ENCODE measurements at regions of chr4 and their contacts with region 1.

Region 1: DNA sequence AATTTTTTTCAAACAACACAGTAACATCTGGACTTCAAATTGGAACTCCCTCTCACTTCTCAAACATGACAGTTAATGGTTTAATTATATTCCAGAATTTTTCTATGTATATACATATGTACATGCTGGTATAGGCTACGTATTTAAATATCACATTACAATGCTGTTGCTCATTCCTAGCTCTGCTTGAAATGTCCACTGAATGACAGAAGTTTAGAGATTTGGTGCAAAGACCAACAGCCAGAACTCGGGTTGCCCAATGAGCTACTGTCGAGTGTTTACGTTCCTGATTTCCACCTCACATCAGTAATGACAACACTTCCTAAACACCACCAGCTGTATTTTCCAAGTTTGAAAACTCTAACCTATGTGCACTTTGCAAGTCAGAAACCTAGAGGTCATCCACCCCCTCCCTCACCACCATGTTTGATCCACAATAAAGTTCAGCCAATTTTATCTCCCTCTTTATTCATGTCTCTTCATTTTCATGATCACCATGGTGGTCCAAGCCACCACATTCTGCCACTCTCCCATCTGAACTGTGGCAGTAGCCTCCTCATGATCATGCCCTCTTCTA is 49.3 kb upstream of the RPL34 start:
- DNase-seq: no peak
- H3K4me3 ChIP-seq: no peak overlapping the region
- H3K27ac ChIP-seq: no peak overlapping the region
- H3K4me1 ChIP-seq: peaks cover 0 to 4% (median 0%) of the 10 kb centered on the region in 4 experiments; a peak in 1 of 7 replicates
- H3K27me3 ChIP-seq: peaks cover 0 to 1% (median 0%) of the 10 kb centered on the region in 4 experiments; a peak in 1 of 7 replicates
- CTCF ChIP-seq: no peak
- EP300 ChIP-seq: no peak
- POLR2A ChIP-seq: no peak
- RAD21 ChIP-seq: no peak

Region 2: DNA sequence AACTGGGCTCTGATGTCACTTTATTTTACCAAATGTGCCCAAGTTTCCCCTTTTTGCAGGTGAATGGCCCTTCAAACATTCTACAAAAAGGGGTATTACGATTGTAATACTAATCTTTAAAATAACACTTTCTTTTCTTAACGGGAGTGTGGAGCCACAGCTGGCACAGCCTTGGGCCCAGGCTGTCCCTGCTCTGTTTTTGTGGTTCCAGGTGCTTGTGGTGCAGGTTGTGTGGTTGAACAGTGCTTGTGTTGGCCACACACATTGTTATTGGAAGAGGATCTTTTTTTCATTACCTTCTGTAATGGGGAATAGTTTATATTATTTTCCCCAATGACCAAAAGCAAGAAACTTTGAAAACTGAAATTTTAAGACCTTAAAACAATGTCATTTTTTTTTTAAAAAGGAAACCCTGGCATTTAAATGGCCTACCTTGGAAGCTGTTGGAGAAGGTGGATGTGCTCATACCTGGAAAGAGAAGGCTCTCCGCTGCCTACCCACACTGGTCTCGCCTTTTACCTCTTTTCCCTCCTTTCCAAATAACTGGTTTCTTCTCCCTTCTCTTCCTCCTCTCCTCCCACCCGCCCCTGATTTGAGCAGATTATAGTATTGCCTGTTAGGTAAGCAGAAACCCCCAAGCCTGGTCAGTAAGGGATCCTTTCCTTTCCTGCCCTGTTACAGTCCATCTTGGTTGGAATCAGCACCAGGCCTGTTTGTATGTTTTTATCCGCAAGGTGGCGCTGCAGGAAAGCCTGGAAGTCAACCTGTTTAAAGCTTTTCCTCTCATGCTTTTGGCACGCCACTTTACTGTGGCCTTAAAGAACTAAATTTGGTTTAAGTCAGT is 552.8 kb before region 1 on chr4:
- CTCF ChIA-PET with region 1: interaction called, 31 read pairs
- POLR2A ChIA-PET with region 1: no interaction called
- DNase-seq: peak; percentile 19 to 91
- H3K4me3 ChIP-seq: no peak overlapping the region
- H3K27ac ChIP-seq: no peak overlapping the region
- H3K4me1 ChIP-seq: no peaks in the 10 kb centered on the region
- H3K27me3 ChIP-seq: no peaks in the 10 kb centered on the region
- CTCF ChIP-seq: peak; percentile 57 to 87 (median 75)
- EP300 ChIP-seq: no peak
- POLR2A ChIP-seq: no peak
- RAD21 ChIP-seq: peak; percentile 84 to 87

Region 3: GRCh38 chr4:108036213-108036612 is 534.9 kb before region 1 on chr4:
- CTCF ChIA-PET with region 1: interaction called, 10 read pairs
- POLR2A ChIA-PET with region 1: no interaction called
- DNase-seq: no peak
- H3K4me3 ChIP-seq: no peak overlapping the region
- H3K27ac ChIP-seq: no peak overlapping the region
- H3K4me1 ChIP-seq: no peaks in the 10 kb centered on the region
- H3K27me3 ChIP-seq: no peaks in the 10 kb centered on the region
- CTCF ChIP-seq: no peak
- EP300 ChIP-seq: no peak
- POLR2A ChIP-seq: no peak
- RAD21 ChIP-seq: no peak

Region 4: GRCh38 chr4:108160741-108161352 is 410.2 kb before region 1 on chr4:
- CTCF ChIA-PET with region 1: interaction called, 10 read pairs
- POLR2A ChIA-PET with region 1: no interaction called
- DNase-seq: no peak
- H3K4me3 ChIP-seq: peak overlapping the region in 1 of 4 experiments; percentile 31; a peak in 2 of 8 replicates
- H3K27ac ChIP-seq: no peak overlapping the region
- H3K4me1 ChIP-seq: peaks cover 3 to 12% (median 7%) of the 10 kb centered on the region in 4 experiments; a peak in 5 of 7 replicates
- H3K27me3 ChIP-seq: peaks cover 13 to 35% (median 23%) of the 10 kb centered on the region in 4 experiments
- CTCF ChIP-seq: no peak
- EP300 ChIP-seq: peak in 1 of 2 experiments; percentile 41; a peak in 1 of 3 replicates
- POLR2A ChIP-seq: no peak
- RAD21 ChIP-seq: no peak

Region 5: DNA sequence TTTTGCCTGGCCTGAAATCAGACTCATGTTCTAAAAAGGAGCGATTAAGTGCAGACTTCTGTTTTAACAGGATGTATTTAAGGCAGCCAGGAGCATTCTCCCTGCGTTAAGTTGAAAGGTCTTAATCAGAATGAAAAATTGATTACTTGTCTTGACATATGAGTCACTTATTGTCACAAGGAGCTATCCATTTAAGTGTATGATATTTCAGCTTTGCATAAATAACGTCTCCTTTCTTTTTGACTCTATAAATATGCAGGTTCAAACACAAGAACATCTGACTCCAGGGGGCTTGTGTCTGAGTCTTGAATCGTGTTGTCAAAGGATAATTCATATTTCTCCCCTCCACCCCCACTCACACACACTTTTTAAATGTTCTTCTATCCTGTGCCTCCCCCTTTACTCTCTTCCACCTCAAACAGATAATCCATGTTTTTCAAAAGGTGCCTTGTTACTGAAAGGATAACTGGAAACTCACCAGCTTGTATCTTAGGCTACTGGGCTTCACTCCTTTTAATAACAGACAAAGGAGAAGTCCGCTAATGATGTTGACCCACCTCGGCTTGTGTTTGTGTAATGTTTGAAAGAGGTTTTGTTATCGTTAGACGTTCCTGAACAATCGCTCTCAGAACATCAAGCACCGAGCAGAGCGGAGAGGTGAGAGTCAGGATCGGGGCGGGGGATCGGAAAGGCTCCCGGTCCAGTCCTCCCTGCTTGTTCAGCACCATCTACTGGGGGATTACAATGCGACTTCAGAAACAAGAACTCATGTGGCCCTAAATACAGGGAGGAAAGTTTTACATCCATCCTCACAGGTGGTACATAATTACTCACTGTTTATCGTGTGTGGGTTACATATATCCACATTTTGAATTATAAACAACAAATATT is 58.2 kb before region 1 on chr4:
- CTCF ChIA-PET with region 1: interaction called, 11 read pairs
- POLR2A ChIA-PET with region 1: no interaction called
- DNase-seq: peak; percentile 15 to 54
- H3K4me3 ChIP-seq: no peak overlapping the region
- H3K27ac ChIP-seq: no peak overlapping the region
- H3K4me1 ChIP-seq: no peaks in the 10 kb centered on the region
- H3K27me3 ChIP-seq: no peaks in the 10 kb centered on the region; a peak in 1 of 7 replicates
- CTCF ChIP-seq: peak; percentile 43 to 67 (median 43)
- EP300 ChIP-seq: no peak
- POLR2A ChIP-seq: no peak
- RAD21 ChIP-seq: peak; percentile 70 to 74

Region 6: GRCh38 chr4:108560616-108561015 is 10.5 kb before region 1 on chr4:
- CTCF ChIA-PET with region 1: interaction called, 18 read pairs
- POLR2A ChIA-PET with region 1: no interaction called
- DNase-seq: no peak
- H3K4me3 ChIP-seq: no peak overlapping the region
- H3K27ac ChIP-seq: no peak overlapping the region
- H3K4me1 ChIP-seq: no peaks in the 10 kb centered on the region
- H3K27me3 ChIP-seq: no peaks in the 10 kb centered on the region
- CTCF ChIP-seq: no peak
- EP300 ChIP-seq: no peak
- POLR2A ChIP-seq: no peak
- RAD21 ChIP-seq: no peak

Region 7: DNA sequence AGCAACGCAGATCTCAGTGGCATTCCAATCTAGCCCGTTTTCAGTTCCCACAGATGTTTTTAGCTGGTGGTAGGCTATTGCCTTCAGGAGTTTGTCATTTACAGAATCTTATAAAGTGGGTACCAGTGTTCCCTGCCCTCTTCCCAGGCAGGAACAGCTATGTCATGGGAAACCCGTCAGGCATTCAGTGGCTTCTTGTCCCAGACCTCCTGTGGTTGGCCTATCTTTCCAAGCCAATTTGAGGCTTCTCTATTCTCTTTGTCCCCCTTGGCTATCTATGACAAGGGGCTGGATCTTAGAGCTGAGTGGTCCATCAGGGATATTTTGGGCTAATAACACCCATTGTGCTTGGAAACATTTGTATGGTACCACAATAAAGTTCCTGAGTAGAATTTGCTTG is 15.7 kb after region 1 on chr4:
- CTCF ChIA-PET with region 1: interaction called, 19 read pairs
- POLR2A ChIA-PET with region 1: no interaction called
- DNase-seq: no peak
- H3K4me3 ChIP-seq: no peak overlapping the region
- H3K27ac ChIP-seq: no peak overlapping the region
- H3K4me1 ChIP-seq: no peaks in the 10 kb centered on the region; a peak in 1 of 7 replicates
- H3K27me3 ChIP-seq: peaks cover 0 to 5% (median under 1%) of the 10 kb centered on the region in 4 experiments; a peak in 4 of 7 replicates
- CTCF ChIP-seq: no peak
- EP300 ChIP-seq: no peak
- POLR2A ChIP-seq: no peak
- RAD21 ChIP-seq: no peak